Ascending aorta (tissue), 2 donors: ENCODE measurements at regions of chr3 and their contacts with region 1.

Region 1: GRCh38 chr3:129794311-129795185 is 99.0 kb downstream of the TMCC1 start:
- DNase-seq: no peak
- H3K4me3 ChIP-seq: no peak overlapping the region
- H3K27ac ChIP-seq: no peak overlapping the region
- H3K4me1 ChIP-seq: peaks cover 0 to 15% of the 10 kb centered on the region in 2 donors
- H3K27me3 ChIP-seq: no peaks in the 10 kb centered on the region
- CTCF ChIP-seq: no peak

Region 2: DNA sequence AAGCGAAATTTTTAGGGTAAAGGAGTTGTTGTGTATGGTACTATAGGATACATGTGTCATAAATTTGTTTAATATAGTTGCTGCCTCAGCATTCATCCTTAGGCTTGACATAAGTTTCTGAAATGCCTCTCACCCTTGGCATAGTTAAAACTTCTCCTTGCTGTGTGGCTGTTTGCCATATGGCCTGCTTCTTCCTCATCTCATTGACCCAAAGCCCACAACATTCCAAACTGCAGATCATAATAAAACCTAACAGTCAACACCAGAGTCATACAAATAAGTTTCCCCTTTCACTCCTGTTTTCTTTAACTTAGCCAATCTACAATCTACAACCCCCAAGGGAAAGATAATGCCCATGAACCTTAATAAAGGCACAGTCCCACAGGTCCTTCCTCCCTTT is 37.7 kb before region 1 on chr3:
- intact Hi-C with region 1: loop called (anchors 5 kb)
- DNase-seq: no peak
- H3K4me3 ChIP-seq: no peak overlapping the region
- H3K27ac ChIP-seq: no peak overlapping the region
- H3K4me1 ChIP-seq: no peaks in the 10 kb centered on the region
- H3K27me3 ChIP-seq: no peaks in the 10 kb centered on the region
- CTCF ChIP-seq: no peak

Region 3: DNA sequence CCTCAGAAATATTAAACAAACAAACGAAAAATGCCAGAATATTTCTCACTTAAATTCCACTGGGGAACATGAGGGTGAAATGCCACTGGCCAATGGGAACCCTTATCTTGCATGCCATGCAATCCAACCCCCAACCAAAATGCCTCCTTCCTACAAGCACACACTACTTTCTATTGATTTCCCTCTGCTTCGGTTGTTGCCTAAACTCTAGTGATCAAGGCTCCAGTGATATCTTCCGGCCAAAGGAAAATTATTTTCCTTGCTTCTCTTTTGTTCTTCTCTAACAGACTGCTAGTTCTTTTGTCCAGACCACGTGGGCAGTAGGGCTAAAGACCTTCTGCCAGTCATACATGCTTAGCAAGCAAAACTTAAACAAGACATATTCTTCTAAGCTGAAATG is 16.7 kb before region 1 on chr3:
- intact Hi-C with region 1: no loop called
- DNase-seq: no peak
- H3K4me3 ChIP-seq: no peak overlapping the region
- H3K27ac ChIP-seq: no peak overlapping the region
- H3K4me1 ChIP-seq: peaks cover 0 to 4% of the 10 kb centered on the region in 2 donors
- H3K27me3 ChIP-seq: no peaks in the 10 kb centered on the region
- CTCF ChIP-seq: no peak